ENCODE measurements at regions of chr14 and their contacts with region 1.

Region 1: DNA sequence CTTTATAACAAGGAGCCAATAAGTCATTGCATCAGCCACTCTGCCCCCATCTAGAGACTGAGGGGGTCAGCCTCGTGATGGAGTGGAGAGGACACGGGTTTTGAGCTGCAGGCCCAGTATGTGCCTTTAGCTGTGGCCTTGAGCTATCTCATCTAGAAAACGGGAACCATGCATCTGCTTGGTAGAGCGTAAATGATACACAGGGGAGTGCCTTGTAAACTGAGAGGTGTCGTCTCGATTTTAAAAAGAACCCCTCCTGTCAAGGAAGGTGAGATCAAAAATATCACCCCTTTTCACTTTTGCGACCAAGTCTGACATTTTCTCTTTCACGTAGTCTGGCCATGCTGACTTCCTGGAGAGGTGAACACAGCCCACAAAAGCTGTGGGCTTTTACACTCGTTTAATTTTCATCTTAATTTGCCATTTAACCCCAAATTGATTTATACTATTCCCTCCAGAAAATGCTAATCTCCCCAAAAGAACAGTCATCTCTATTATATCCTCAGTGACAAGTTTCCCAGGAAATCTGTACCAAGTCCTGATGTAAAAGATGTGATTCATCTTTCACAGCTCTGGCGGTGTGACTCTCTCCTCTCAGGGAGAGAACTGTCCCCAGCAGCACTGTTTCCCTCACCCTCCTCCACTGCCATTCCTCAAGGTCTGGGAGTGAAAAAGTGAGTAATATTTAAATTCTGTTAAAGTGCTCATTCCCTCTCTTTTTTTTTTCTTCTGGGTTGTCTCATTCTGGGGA is 30.6 kb downstream of the VCPKMT start:
- DNase-seq: peak; percentile 91
- ATAC-seq: peak; percentile 75
- H3K4me3 ChIP-seq: peak overlapping the region in 3 of 5 experiments; percentile 18 to 48 (median 24)
- H3K4me3 Mint-ChIP-seq: peak overlapping the region; percentile 82
- H3K27ac ChIP-seq: peak overlapping the region; percentile 95 to 100
- H3K27ac Mint-ChIP-seq: peak overlapping the region; percentile 96
- H3K4me1 ChIP-seq: peaks cover 85 to 91% of the 10 kb centered on the region in 2 donors
- H3K4me1 Mint-ChIP-seq: peaks cover 87% of the 10 kb centered on the region
- H3K27me3 ChIP-seq: no peaks in the 10 kb centered on the region
- H3K27me3 Mint-ChIP-seq: no peaks in the 10 kb centered on the region
- CTCF ChIP-seq: no peak

Region 2: GRCh38 chr14:49977126-49977841 is 108.5 kb before region 1 on chr14:
- CTCF ChIA-PET with region 1: interaction called, 3 read pairs
- POLR2A ChIA-PET with region 1: interaction called, 11 read pairs
- intact Hi-C with region 1: no loop called
- DNase-seq: peak; percentile 80
- ATAC-seq: peak; percentile 85
- H3K4me3 ChIP-seq: peak overlapping the region; percentile 26 to 69 (median 48)
- H3K4me3 Mint-ChIP-seq: peak overlapping the region; percentile 83
- H3K27ac ChIP-seq: peak overlapping the region; percentile 84 to 87
- H3K27ac Mint-ChIP-seq: peak overlapping the region; percentile 90
- H3K4me1 ChIP-seq: peaks cover 85 to 88% of the 10 kb centered on the region in 2 donors
- H3K4me1 Mint-ChIP-seq: peaks cover 80% of the 10 kb centered on the region
- H3K27me3 ChIP-seq: no peaks in the 10 kb centered on the region
- H3K27me3 Mint-ChIP-seq: no peaks in the 10 kb centered on the region
- CTCF ChIP-seq: no peak

Region 3: GRCh38 chr14:50023671-50024490 is 61.9 kb before region 1 on chr14:
- CTCF ChIA-PET with region 1: no interaction called
- POLR2A ChIA-PET with region 1: no interaction called
- intact Hi-C with region 1: no loop called
- DNase-seq: no peak
- ATAC-seq: no peak
- H3K4me3 ChIP-seq: no peak overlapping the region
- H3K4me3 Mint-ChIP-seq: no peak overlapping the region
- H3K27ac ChIP-seq: no peak overlapping the region
- H3K27ac Mint-ChIP-seq: no peak overlapping the region
- H3K4me1 ChIP-seq: peaks cover 9 to 10% of the 10 kb centered on the region in 2 donors
- H3K4me1 Mint-ChIP-seq: peaks cover 21% of the 10 kb centered on the region
- H3K27me3 ChIP-seq: no peaks in the 10 kb centered on the region
- H3K27me3 Mint-ChIP-seq: no peaks in the 10 kb centered on the region
- CTCF ChIP-seq: no peak

Region 4: GRCh38 chr14:50045039-50045711 is 40.6 kb before region 1 on chr14:
- CTCF ChIA-PET with region 1: interaction called, 5 read pairs
- POLR2A ChIA-PET with region 1: interaction called, 5 read pairs
- intact Hi-C with region 1: loop called (anchors 1 kb)
- DNase-seq: peak; percentile 75
- ATAC-seq: peak; percentile 71
- H3K4me3 ChIP-seq: no peak overlapping the region
- H3K4me3 Mint-ChIP-seq: peak overlapping the region; percentile 49
- H3K27ac ChIP-seq: peak overlapping the region; percentile 92 to 95
- H3K27ac Mint-ChIP-seq: peak overlapping the region; percentile 88
- H3K4me1 ChIP-seq: peaks cover 60 to 62% of the 10 kb centered on the region in 2 donors
- H3K4me1 Mint-ChIP-seq: peaks cover 76% of the 10 kb centered on the region
- H3K27me3 ChIP-seq: no peaks in the 10 kb centered on the region
- H3K27me3 Mint-ChIP-seq: no peaks in the 10 kb centered on the region
- CTCF ChIP-seq: no peak

Region 5: GRCh38 chr14:50067723-50068495 is 17.8 kb before region 1 on chr14:
- CTCF ChIA-PET with region 1: interaction called, 56 read pairs
- POLR2A ChIA-PET with region 1: interaction called, 32 read pairs
- intact Hi-C with region 1: loop called (anchors 1 kb)
- DNase-seq: no peak
- ATAC-seq: no peak
- H3K4me3 ChIP-seq: no peak overlapping the region
- H3K4me3 Mint-ChIP-seq: no peak overlapping the region
- H3K27ac ChIP-seq: no peak overlapping the region
- H3K27ac Mint-ChIP-seq: peak overlapping the region; percentile 100
- H3K4me1 ChIP-seq: peaks cover 51 to 52% of the 10 kb centered on the region in 2 donors
- H3K4me1 Mint-ChIP-seq: peaks cover 69% of the 10 kb centered on the region
- H3K27me3 ChIP-seq: no peaks in the 10 kb centered on the region
- H3K27me3 Mint-ChIP-seq: no peaks in the 10 kb centered on the region
- CTCF ChIP-seq: no peak

Region 6: DNA sequence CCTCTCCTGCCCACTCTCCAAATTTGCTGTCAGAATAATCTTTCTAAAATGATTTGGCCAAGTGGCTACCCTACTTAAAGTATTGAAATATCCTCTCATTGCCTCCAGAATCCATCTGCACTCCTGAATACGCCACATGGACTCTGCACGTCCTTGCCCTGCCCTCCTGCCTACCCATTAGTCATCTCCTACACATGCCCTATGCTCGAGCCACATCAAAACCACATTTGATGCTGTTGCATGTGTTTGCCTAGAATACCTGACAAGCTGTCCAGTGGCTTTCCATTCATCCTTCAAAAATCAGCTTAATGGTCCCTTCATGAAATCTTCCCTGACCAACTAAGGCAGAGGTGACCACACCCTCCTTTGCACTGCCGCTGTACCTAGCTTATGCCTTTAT is 13.6 kb after region 1 on chr14:
- CTCF ChIA-PET with region 1: interaction called, 18 read pairs
- POLR2A ChIA-PET with region 1: interaction called, 5 read pairs
- intact Hi-C with region 1: loop called (anchors 1 kb)
- DNase-seq: no peak
- ATAC-seq: no peak
- H3K4me3 ChIP-seq: no peak overlapping the region
- H3K4me3 Mint-ChIP-seq: no peak overlapping the region
- H3K27ac ChIP-seq: no peak overlapping the region
- H3K27ac Mint-ChIP-seq: peak overlapping the region; percentile 28
- H3K4me1 ChIP-seq: peaks cover 42 to 63% of the 10 kb centered on the region in 2 donors
- H3K4me1 Mint-ChIP-seq: peaks cover 66% of the 10 kb centered on the region
- H3K27me3 ChIP-seq: no peaks in the 10 kb centered on the region
- H3K27me3 Mint-ChIP-seq: no peaks in the 10 kb centered on the region
- CTCF ChIP-seq: no peak

Region 7: DNA sequence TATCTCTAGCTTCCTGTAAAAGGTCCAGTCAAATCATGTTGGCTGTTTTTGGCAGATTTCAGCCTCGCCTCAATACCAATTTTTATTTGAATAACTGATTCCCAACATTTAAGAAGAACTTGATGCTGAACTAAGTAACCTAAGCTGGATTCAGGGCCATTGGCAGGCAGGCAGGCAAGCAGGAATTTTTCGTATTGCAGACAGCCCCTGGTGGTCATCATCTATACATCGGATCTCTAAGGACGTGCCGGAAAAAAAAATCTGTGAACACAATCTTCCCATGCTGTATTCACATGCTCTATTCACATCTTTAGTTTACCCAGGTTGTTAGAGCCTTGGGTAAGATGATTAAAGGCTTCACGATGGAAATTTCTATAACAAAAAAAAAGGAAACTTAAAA is 23.6 kb after region 1 on chr14:
- CTCF ChIA-PET with region 1: interaction called, 18 read pairs
- POLR2A ChIA-PET with region 1: interaction called, 9 read pairs
- intact Hi-C with region 1: loop called (anchors 1 kb)
- DNase-seq: no peak
- ATAC-seq: no peak
- H3K4me3 ChIP-seq: no peak overlapping the region
- H3K4me3 Mint-ChIP-seq: no peak overlapping the region
- H3K27ac ChIP-seq: peak overlapping the region in 1 of 2 donors; percentile 85
- H3K27ac Mint-ChIP-seq: no peak overlapping the region
- H3K4me1 ChIP-seq: peaks cover 28 to 34% of the 10 kb centered on the region in 2 donors
- H3K4me1 Mint-ChIP-seq: peaks cover 40% of the 10 kb centered on the region
- H3K27me3 ChIP-seq: no peaks in the 10 kb centered on the region
- H3K27me3 Mint-ChIP-seq: no peaks in the 10 kb centered on the region
- CTCF ChIP-seq: no peak

Region 8: DNA sequence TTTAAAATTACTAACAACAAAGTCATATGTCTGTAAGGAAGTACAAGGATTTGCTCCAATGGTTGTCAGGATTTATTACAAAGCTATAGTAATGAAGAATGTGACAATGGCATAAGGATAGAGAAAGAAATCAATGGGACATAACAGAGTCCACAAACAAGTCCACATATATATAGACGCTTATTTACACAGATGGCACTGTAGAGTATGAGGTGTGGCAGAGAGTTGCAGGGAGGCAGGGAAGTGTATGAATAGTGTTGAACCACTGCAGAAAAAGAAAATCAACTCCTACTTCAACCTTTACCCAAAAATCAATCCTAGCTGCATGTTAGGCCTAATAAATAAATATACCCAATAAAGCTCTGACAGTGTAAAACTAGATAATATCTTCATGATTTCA is 124.3 kb after region 1 on chr14:
- CTCF ChIA-PET with region 1: no interaction called
- POLR2A ChIA-PET with region 1: no interaction called
- intact Hi-C with region 1: no loop called
- DNase-seq: no peak
- ATAC-seq: no peak
- H3K4me3 ChIP-seq: no peak overlapping the region
- H3K4me3 Mint-ChIP-seq: no peak overlapping the region
- H3K27ac ChIP-seq: no peak overlapping the region
- H3K27ac Mint-ChIP-seq: no peak overlapping the region
- H3K4me1 ChIP-seq: no peaks in the 10 kb centered on the region
- H3K4me1 Mint-ChIP-seq: peaks cover 6% of the 10 kb centered on the region
- H3K27me3 ChIP-seq: no peaks in the 10 kb centered on the region
- H3K27me3 Mint-ChIP-seq: no peaks in the 10 kb centered on the region
- CTCF ChIP-seq: no peak

Region 9: GRCh38 chr14:50272503-50272902 is 186.8 kb after region 1 on chr14:
- CTCF ChIA-PET with region 1: no interaction called
- POLR2A ChIA-PET with region 1: no interaction called
- intact Hi-C with region 1: no loop called
- DNase-seq: no peak
- ATAC-seq: no peak
- H3K4me3 ChIP-seq: no peak overlapping the region
- H3K4me3 Mint-ChIP-seq: no peak overlapping the region
- H3K27ac ChIP-seq: no peak overlapping the region
- H3K27ac Mint-ChIP-seq: no peak overlapping the region
- H3K4me1 ChIP-seq: no peaks in the 10 kb centered on the region
- H3K4me1 Mint-ChIP-seq: no peaks in the 10 kb centered on the region
- H3K27me3 ChIP-seq: no peaks in the 10 kb centered on the region
- H3K27me3 Mint-ChIP-seq: no peaks in the 10 kb centered on the region
- CTCF ChIP-seq: no peak